Left cardiac atrium (tissue), 4 donors: ENCODE measurements at regions of chr6 and their contacts with region 1.

Region 1: GRCh38 chr6:109073344-109074132 is 21.1 kb downstream of the SESN1 start:
- DNase-seq: no peak
- ATAC-seq: peak; percentile 62 to 71

Region 2: DNA sequence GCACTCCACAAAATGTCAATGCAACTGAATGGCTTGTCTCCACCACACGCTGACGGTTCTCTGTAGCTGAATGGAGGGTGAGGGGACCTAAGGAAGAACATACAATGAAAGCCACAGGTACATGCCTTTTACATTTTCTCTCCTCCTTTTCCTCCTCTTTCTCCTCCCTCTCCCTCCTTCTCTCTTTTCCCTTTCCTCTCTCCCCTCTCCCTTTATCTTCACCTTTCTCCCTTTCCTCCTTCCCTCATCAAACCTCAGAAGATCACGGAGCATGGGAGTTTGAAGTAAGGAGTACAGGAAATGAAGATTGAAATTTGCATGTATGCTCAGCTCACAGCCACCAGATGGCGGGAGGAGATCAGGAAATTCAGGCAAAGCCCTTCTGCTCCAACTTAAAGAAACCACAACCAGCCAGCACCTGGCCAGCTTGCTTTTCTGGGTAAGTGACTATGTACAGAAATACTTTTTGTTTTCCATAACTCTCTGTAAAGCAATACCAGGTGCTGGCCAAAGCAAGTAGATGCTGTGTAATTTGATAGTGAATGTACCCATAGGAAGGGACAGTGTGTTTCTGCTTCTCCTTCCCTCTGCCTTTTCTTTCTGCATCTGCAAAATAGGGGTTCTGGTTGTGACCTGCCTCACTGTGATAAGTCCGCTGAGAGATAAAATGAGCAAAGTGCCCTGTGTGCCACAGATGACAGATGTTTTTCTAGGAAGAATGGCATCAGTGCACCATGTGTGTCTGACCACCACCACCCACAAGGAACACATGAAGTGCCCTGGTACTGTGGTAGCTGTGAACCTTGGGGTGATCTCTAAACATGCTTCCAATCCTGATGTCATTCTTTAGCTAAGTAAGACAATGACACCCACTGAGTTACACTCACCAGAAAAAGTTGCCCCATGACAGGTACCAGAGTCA is 531.4 kb before region 1 on chr6:
- intact Hi-C with region 1: loop called in 1 of 2 experiments (anchors 2 kb)
- DNase-seq: peak; percentile 60
- ATAC-seq: peak; percentile 85 to 88

Region 3: GRCh38 chr6:108896111-108896661 is 177.4 kb before region 1 on chr6:
- intact Hi-C with region 1: loop called in 1 of 2 experiments (anchors 10 kb)
- DNase-seq: no peak
- ATAC-seq: peak; percentile 45 to 75

Region 4: DNA sequence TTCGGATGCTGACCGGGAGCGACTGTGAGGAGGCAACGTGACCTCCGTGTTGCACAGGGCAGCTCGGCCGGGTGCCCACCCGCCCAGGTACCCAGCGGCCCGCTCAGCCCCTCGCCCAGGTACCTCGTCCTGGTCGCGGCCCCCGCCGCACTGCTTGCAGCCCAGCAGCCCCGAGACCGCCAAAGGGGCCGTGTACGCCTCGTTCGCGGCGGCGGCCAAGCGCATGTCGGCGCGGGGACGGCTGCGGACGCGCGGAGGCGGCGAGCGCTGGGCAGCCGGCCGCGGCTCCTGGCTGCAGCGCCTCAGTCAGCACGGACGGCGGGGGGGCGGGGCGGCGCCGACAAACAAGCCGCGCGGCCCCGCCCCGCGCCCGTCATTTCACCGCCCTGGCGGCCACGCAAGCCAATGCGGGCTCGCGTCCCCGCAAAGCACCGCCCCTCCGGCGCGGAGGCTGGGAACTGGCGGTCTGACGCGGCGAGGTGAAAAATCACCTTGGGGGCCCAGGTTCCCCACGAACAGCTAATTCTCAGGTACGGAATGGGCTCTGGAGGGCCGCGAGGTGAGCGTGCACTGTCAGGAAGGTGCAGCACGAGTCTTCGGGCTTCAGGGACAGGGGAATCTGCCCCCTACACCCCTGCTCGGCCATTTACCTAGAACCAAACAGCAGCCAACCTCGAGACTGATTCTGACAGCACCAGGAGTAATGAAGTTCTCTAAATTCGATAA is 64.1 kb before region 1 on chr6:
- intact Hi-C with region 1: loop called in 1 of 2 experiments (anchors 10 kb)
- DNase-seq: peak; percentile 97
- ATAC-seq: peak; percentile 98 to 99

Region 5: GRCh38 chr6:109024784-109025183 is 48.8 kb before region 1 on chr6:
- intact Hi-C with region 1: no loop called
- DNase-seq: no peak
- ATAC-seq: no peak